ENCODE measurements at regions of chr1 and their contacts with region 1.

Region 1: DNA sequence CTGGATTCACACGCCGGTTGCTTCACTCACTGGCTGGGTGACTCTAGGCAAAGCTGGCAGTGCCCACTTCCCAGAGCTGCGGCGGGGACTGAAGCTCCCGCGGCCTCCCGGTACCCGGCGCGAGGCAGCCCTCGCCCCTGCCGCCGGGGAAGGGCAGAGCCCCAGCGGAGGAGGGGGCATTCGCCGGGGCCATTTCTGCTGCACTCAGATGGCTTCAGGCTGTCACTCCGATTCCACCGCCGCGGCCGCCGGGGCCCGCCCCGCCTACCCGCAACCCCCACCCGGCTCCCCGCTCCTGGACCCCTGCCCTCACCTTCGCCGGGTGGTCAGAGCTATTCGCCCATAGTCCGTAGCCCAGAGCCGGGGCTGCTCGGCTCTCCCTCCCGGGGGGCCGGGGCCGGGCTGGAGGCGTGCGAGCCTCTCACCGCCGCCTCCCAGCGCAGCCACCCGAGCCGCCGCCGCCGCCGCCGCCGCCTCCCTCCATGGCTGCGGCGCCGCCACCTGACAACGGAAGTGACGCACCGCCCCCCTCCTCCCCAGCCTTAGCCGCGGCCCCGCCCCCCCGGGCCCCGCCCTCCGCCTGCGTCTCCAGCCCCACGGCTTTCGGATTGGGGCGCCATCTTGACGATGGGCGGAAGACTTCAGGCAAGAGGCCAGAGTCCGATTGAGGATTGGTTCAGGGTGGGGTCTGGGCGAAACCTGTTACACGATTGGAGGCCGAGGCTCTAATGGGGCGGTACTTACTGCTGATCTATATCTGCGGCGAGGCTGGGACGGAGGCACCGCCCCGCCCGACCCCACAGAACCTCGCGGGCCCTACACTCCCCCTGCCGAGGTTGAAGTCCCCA is at the start of gene STK40:
- DNase-seq: peak; percentile 99
- H3K4me3 Mint-ChIP-seq: peak within 1 kb of the TSS; percentile 92
- H3K27ac Mint-ChIP-seq: peak within 1 kb of the TSS; percentile 99
- H3K4me1 Mint-ChIP-seq: peaks cover 55% of the 10 kb centered on the region
- H3K27me3 Mint-ChIP-seq: no peaks in the 10 kb centered on the region
- total RNA-seq, gene STK40: 39.6 to 40.6 TPM

Region 2: DNA sequence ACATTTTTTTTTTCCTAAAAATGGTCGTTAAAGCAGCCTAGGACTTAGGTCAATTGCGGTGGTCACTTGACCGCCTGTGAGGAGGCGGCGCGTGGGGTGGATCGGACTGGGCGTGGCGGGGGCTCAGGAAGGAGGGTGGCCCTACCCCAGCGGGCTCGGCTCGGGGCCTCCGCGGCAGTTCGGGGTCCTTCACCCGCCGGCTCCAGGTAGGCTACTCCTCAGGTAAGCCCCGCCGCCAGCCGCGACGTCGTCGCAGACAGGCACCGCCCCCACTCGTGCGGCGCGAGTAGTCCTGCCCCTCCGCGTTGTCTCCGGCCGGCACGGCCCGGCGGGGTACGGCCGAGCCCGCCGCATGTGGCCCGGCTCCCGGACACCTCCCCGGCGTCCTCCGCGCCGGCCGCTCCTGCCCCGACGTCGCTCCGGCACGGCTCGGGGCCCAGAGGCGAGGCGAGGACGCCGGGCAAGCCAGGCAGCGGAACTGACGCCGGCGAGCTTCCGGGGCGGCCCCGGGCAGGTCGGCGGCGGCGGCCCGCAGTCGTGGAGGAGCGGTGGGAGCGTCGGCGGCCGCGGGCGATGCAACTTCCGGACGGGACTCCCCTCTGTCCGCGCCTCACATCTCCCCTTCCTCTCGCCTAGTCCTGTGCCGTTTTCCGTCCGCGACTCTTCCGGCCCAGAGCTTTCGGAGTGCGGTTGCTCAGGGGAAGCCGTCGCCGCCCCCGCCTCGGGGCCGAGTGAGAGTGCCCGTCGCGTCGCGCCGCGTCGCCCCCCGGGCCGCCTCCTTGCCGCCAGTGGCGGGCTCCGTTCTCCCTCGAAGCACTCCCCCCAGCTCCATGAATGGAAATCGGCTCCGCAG is 454.8 kb before region 1 on chr1 and contains the start of gene AGO3:
- CTCF ChIA-PET with region 1: no interaction called
- intact Hi-C with region 1: loop called (anchors 5 kb)
- DNase-seq: peak; percentile 92
- H3K4me3 Mint-ChIP-seq: peak within 1 kb of the TSS; percentile 94
- H3K27ac Mint-ChIP-seq: peak within 1 kb of the TSS; percentile 90
- H3K4me1 Mint-ChIP-seq: peaks cover 35% of the 10 kb centered on the region
- H3K27me3 Mint-ChIP-seq: no peaks in the 10 kb centered on the region
- total RNA-seq, gene AGO3: 25.1 to 28.2 TPM

Region 3: GRCh38 chr1:36223993-36224536 is 161.6 kb before region 1 on chr1 and contains the start of gene THRAP3:
- CTCF ChIA-PET with region 1: no interaction called
- intact Hi-C with region 1: loop called (anchors 1 kb)
- DNase-seq: peak; percentile 100
- H3K4me3 Mint-ChIP-seq: peak within 1 kb of the TSS; percentile 90
- H3K27ac Mint-ChIP-seq: peak within 1 kb of the TSS; percentile 98
- H3K4me1 Mint-ChIP-seq: peaks cover 38% of the 10 kb centered on the region
- H3K27me3 Mint-ChIP-seq: no peaks in the 10 kb centered on the region
- total RNA-seq, gene THRAP3: 128 to 133 TPM

Region 4: GRCh38 chr1:36342481-36343478 is 42.9 kb before region 1 on chr1:
- CTCF ChIA-PET with region 1: interaction called, 10 read pairs
- intact Hi-C with region 1: loop called (anchors 2 kb)
- DNase-seq: peak; percentile 70
- H3K4me3 Mint-ChIP-seq: no peak overlapping the region
- H3K27ac Mint-ChIP-seq: peak overlapping the region; percentile 66
- H3K4me1 Mint-ChIP-seq: peaks cover 18% of the 10 kb centered on the region
- H3K27me3 Mint-ChIP-seq: no peaks in the 10 kb centered on the region

Region 5: DNA sequence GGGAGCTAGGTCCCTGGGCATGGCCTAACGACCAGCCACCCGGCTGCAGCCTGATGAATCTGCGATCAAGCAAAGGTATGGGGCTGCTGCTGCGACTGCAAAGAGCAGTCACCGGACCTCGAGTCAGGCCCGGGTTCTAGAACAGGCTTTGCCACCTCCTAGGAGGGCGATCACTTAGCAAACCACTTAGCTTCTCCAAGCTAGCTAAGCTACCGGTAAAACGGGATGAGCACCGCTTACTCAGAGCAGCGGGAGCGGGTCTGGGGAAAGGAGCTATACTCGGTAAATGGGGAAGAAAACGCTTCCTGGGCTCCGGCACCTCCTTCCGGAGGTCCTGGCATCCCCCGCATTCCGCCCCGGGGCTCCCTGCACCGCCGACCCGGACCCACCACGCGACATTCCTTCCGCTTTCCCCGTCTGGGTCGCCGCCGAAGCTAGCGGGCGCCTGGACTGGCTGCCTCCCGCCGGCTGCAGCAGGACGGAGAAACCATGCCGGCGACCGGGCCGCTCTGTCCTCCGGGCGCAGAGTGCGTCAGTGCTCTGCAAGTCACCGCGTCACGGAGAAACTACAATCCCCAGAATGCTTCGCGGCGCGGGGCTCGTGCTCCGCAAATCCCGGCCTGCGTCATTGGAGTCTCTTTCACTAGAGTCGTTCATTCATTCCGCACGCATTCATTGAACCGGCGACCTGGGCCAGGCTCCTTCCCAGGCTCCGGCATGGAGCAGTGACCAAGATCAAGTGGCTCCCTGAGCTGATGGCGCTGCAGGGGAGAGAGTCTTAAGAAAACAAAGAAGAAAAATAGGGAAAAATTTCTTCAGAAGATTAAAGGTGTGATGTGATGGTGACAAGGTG is 12.0 kb after region 1 on chr1 and contains the start of gene LSM10:
- CTCF ChIA-PET with region 1: interaction called, 12 read pairs
- intact Hi-C with region 1: loop called (anchors 1 kb)
- DNase-seq: peak; percentile 95
- H3K4me3 Mint-ChIP-seq: peak within 1 kb of the TSS; percentile 96
- H3K27ac Mint-ChIP-seq: peak within 1 kb of the TSS; percentile 94
- H3K4me1 Mint-ChIP-seq: peaks cover 35% of the 10 kb centered on the region
- H3K27me3 Mint-ChIP-seq: no peaks in the 10 kb centered on the region
- total RNA-seq, gene LSM10: 33.5 to 36.5 TPM

Region 6: GRCh38 chr1:36458654-36459309 is 73.1 kb after region 1 on chr1:
- CTCF ChIA-PET with region 1: no interaction called
- intact Hi-C with region 1: loop called (anchors 5 kb)
- DNase-seq: peak; percentile 80
- H3K4me3 Mint-ChIP-seq: peak overlapping the region; percentile 17
- H3K27ac Mint-ChIP-seq: peak overlapping the region; percentile 83
- H3K4me1 Mint-ChIP-seq: peaks cover 40% of the 10 kb centered on the region
- H3K27me3 Mint-ChIP-seq: no peaks in the 10 kb centered on the region

Region 7: DNA sequence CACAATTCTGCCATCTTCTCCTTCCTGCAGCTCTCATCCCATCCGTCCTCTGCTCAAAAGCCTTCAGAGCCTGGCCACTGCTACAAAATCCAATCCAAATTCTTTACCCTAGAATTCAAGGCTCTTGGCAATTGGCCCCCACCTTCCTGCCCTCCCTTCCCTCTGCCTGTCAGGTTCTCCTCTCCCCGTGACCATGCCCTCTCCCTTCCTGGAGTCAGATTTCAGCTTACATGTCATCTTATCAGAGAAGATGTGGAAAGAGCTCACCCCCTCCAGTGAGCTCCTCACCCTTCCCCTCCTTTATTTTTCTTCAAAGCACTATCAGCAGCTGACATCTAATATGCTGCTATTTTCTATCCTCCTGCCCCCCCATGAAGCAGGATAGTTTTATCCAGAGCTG is 561.8 kb after region 1 on chr1:
- CTCF ChIA-PET with region 1: no interaction called
- intact Hi-C with region 1: no loop called
- DNase-seq: no peak
- H3K4me3 Mint-ChIP-seq: no peak overlapping the region
- H3K27ac Mint-ChIP-seq: no peak overlapping the region
- H3K4me1 Mint-ChIP-seq: no peaks in the 10 kb centered on the region
- H3K27me3 Mint-ChIP-seq: peaks cover 7% of the 10 kb centered on the region